Thyroid gland (tissue), 4 donors: ENCODE measurements at regions of chr9 and their contacts with region 1.

Region 1: DNA sequence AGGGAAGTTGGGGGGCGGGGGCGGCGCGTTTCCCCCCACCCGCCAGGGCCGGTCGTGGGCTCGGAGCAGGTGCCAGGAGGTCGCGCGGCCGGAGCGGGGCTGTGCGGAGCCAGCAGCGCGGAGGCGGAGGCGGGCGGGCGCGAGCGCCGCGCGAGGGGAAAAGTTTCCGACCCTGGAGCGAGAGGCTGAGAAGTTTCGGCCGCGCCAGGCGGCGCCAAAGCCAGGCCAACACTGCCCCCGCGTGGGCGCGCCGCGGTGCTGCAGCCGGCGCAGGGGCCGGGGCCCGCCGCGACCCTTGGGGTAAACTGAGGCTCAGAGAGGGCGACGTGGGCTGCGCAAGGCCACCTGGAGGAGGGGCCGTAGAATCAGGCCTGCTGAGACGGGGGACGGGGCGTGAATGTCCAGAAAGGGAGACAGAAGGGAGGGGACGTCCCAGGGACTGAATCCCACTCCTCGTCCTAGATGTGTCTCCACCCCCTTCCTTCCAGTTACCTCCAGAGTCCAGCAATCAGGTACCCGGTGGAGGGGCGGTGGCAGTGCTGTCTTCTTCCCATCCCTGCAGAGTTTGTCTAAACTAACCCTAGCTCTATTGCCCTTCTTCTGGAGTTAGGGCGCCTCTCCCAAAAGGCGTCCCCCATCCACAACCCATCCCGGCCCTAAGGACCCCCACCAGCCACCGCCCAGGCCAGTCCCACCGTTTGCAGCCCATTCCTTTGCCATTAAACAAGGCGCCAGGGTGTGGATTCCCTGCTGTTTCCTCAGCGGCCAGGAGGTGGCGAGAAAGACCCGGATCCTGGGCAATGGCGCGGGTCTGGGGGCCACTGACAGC is 10.2 kb downstream of the C9orf50 start:
- DNase-seq: peak; percentile 74 to 77
- H3K4me3 ChIP-seq: peak overlapping the region in 2 of 3 donors; percentile 54 to 66
- H3K27ac ChIP-seq: peak overlapping the region; percentile 78 to 86 (median 78)
- H3K4me1 ChIP-seq: peaks cover 14 to 53% of the 10 kb centered on the region in 2 donors
- H3K27me3 ChIP-seq: no peaks in the 10 kb centered on the region
- CTCF ChIP-seq: peak; percentile 36 to 99 (median 94)
- POLR2A ChIP-seq: peak in 1 of 2 donors; percentile 10

Region 2: GRCh38 chr9:129139993-129140396 is 470.7 kb before region 1 on chr9:
- intact Hi-C with region 1: loop called (anchors 5 kb)
- DNase-seq: peak; percentile 92 to 95
- H3K4me3 ChIP-seq: peak overlapping the region; percentile 2 to 36 (median 28)
- H3K27ac ChIP-seq: peak overlapping the region; percentile 98 to 100 (median 100)
- H3K4me1 ChIP-seq: peaks cover 48 to 78% of the 10 kb centered on the region in 2 donors
- H3K27me3 ChIP-seq: no peaks in the 10 kb centered on the region
- CTCF ChIP-seq: no peak
- POLR2A ChIP-seq: peak; percentile 60 to 84

Region 3: GRCh38 chr9:129320575-129321263 is 290.0 kb before region 1 on chr9:
- intact Hi-C with region 1: loop called (anchors 5 kb)
- DNase-seq: peak; percentile 74 to 77
- H3K4me3 ChIP-seq: peak overlapping the region in 1 of 3 donors; percentile 34
- H3K27ac ChIP-seq: peak overlapping the region; percentile 84 to 93 (median 88)
- H3K4me1 ChIP-seq: peaks cover 26 to 62% of the 10 kb centered on the region in 2 donors
- H3K27me3 ChIP-seq: no peaks in the 10 kb centered on the region
- CTCF ChIP-seq: peak in 4 of 6 experiments; percentile 32 to 39 (median 35)
- POLR2A ChIP-seq: peak; percentile 25 to 67